Panc1 (cell line): ENCODE measurements at regions of chr9 and their contacts with region 1.

Region 1: GRCh38 chr9:129850821-129851540 is 15.7 kb downstream of the USP20 start:
- DNase-seq: no peak
- ATAC-seq: no peak
- H3K4me3 ChIP-seq: no peak overlapping the region
- H3K27ac ChIP-seq: no peak overlapping the region
- H3K4me1 ChIP-seq: no peaks in the 10 kb centered on the region
- H3K27me3 ChIP-seq: no peaks in the 10 kb centered on the region
- CTCF ChIP-seq: no peak

Region 2: DNA sequence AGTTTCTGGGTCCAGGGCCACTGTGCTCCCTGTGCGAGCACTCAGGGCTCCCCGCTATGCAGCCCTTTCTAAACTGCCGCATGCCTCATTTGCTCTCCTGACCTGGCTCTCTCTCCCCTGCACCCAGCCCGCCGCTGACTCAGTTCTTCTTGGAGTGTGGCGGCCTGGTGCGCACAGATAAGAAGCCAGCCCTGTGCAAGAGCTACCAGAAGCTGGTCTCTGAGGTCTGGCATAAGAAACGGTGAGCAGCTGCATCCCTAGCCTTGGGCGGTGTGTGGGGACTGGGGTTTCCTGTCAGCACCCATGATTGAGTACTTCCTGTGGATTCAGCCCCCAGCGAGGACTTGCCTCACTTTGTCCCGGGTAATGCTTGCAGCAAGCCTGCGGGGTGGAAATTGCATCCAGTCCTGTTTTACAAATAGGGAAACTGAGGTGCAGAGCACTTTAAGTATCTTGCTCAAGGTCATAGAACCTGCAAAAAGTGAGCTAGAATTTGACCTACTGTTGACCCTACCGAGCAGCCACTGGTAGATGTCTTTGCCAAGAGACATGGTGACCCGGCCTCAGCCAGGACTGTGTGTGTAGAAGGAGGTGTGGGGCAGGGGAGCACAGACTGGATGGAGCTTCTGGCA is 12.2 kb after region 1 on chr9:
- CTCF ChIA-PET with region 1: interaction called, 13 read pairs
- POLR2A ChIA-PET with region 1: no interaction called
- in situ Hi-C with region 1: no loop called
- intact Hi-C with region 1: no loop called
- DNase-seq: no peak
- ATAC-seq: no peak
- H3K4me3 ChIP-seq: no peak overlapping the region
- H3K27ac ChIP-seq: no peak overlapping the region
- H3K4me1 ChIP-seq: no peaks in the 10 kb centered on the region
- H3K27me3 ChIP-seq: no peaks in the 10 kb centered on the region
- CTCF ChIP-seq: no peak

Region 3: DNA sequence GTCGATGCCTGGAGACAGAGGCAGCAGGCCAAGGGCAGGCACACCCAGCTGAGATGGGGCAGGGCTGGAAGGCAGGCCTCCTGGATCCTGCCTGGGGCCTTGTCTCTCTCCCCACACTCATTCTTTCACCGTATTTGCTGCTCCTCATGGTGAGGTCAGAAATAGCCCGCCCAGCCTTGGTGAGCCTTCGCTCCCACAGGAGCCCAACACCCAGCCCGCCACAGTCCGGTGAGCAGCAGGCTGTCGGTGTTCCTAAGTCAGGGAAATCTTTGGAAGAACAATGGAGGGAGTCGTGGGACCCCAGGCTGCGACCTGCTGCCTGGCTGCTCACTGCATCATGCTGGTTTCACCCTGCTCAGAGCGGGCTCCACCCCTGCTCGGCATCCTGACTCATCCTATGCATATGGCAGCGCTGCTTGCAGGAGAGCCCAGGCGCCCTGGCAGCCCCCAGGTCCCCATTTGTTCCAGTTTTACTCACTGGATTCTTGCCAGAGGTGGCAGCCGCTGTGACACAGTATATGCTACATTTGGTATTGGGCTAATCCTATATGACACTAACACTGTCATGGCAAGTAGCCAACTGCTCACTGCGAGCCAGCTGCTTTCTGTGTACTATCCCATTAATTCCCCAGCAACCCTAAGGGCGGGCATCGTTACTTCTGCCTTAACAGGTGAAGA is 268.0 kb after region 1 on chr9:
- CTCF ChIA-PET with region 1: no interaction called
- POLR2A ChIA-PET with region 1: no interaction called
- in situ Hi-C with region 1: no loop called
- intact Hi-C with region 1: no loop called
- DNase-seq: no peak
- ATAC-seq: no peak; the same call in 1 of the 2 replicates
- H3K4me3 ChIP-seq: no peak overlapping the region
- H3K27ac ChIP-seq: no peak overlapping the region
- H3K4me1 ChIP-seq: no peaks in the 10 kb centered on the region
- H3K27me3 ChIP-seq: no peaks in the 10 kb centered on the region
- CTCF ChIP-seq: no peak